ENCODE measurements at regions of chr20 and their contacts with region 1.

Region 1: GRCh38 chr20:54320115-54320607 is 112.3 kb downstream of the PFDN4 start:
- DNase-seq: peak; percentile 13
- H3K4me3 Mint-ChIP-seq: no peak overlapping the region
- H3K27ac Mint-ChIP-seq: no peak overlapping the region
- H3K4me1 Mint-ChIP-seq: peaks cover 9% of the 10 kb centered on the region
- H3K27me3 Mint-ChIP-seq: no peaks in the 10 kb centered on the region
- CTCF ChIP-seq: no peak

Region 2: DNA sequence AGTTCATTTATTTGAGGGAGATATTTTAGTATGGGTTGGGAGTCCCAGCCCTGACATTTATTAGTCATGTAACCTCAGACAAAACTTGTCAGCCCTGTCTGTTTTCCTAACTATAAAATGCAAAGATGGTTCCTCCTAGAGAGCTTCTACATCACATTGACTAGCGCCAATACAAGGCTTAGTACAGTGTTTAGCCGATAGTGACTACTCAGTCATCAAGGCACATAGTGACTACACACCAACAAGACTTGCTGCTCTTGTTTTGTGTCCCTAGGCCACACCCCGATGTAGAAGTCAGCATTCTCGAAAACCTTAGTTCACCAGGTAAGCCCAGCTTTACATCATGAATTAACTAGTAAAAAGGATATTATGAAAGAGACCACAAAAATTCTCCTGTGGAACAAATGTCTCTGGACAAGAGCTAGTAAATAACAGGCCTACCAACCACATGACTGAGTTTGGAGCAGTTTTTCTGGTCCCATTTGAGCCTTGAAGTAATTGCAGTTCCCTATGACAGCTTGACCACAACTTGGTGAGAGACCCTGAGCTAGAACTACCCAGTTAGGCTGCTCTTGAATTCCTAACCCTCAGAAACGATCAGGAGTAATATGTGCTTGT is 43.5 kb before region 1 on chr20:
- CTCF ChIA-PET with region 1: interaction called, 12 read pairs
- intact Hi-C with region 1: no loop called
- DNase-seq: peak; percentile 55
- H3K4me3 Mint-ChIP-seq: peak overlapping the region; percentile 42
- H3K27ac Mint-ChIP-seq: peak overlapping the region; percentile 79
- H3K4me1 Mint-ChIP-seq: peaks cover 50% of the 10 kb centered on the region
- H3K27me3 Mint-ChIP-seq: no peaks in the 10 kb centered on the region
- CTCF ChIP-seq: no peak

Measured in Calu3 (cell line).